ENCODE measurements at regions of chr11 and their contacts with region 1.

Region 1: GRCh38 chr11:113994077-113994954 is 19.4 kb downstream of the HTR3A start:
- DNase-seq: no peak
- ATAC-seq: no peak; the same call in none of the 2 replicates
- H3K4me3 ChIP-seq: no peak overlapping the region
- H3K27ac ChIP-seq: no peak overlapping the region
- H3K4me1 ChIP-seq: no peaks in the 10 kb centered on the region
- H3K27me3 ChIP-seq: no peaks in the 10 kb centered on the region; the same call in 1 of the 2 replicates
- CTCF ChIP-seq: peak; percentile 55
- POLR2A ChIP-seq: no peak
- RAD21 ChIP-seq: peak; percentile 65

Region 2: DNA sequence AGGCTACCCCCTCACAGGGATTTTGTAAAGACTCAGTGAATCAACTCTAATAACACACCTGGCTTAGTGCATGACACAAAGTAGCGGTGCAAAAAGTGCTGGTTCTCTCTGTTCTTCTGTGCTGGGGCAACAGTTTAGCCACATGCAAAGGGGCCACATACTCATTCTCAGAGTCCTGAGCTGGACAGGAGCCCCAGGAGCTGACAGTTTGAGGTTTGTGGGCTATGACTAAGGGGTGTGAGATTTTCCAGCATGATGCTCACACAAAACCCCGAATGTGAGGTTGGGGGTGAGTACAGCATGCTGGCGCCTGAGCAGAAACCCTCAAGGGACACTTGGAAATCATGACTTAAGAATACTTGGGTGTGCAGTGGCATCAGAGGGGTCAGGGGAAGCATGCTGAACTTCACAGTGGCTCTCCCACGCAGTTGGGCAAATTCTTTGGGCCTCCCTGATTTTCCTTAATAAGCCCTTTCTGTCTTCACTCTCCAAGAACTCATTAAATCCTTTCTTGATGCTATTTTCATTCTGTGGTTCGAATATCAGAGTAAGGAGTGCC is 319.2 kb before region 1 on chr11:
- CTCF ChIA-PET with region 1: no interaction called
- POLR2A ChIA-PET with region 1: no interaction called
- dilution Hi-C with region 1: no loop called
- in situ Hi-C with region 1: no loop called
- intact Hi-C with region 1: no loop called
- DNase-seq: peak; percentile 88
- ATAC-seq: peak; percentile 71
- H3K4me3 ChIP-seq: no peak overlapping the region
- H3K27ac ChIP-seq: no peak overlapping the region
- H3K4me1 ChIP-seq: no peaks in the 10 kb centered on the region; the same call in 1 of the 2 replicates
- H3K27me3 ChIP-seq: peaks cover 15% of the 10 kb centered on the region
- CTCF ChIP-seq: no peak
- POLR2A ChIP-seq: no peak
- RAD21 ChIP-seq: no peak

Region 3: GRCh38 chr11:113849713-113850112 is 144.6 kb before region 1 on chr11:
- CTCF ChIA-PET with region 1: no interaction called
- POLR2A ChIA-PET with region 1: no interaction called
- dilution Hi-C with region 1: no loop called
- in situ Hi-C with region 1: no loop called
- intact Hi-C with region 1: no loop called
- DNase-seq: no peak
- ATAC-seq: no peak
- H3K4me3 ChIP-seq: no peak overlapping the region
- H3K27ac ChIP-seq: no peak overlapping the region
- H3K4me1 ChIP-seq: no peaks in the 10 kb centered on the region
- H3K27me3 ChIP-seq: no peaks in the 10 kb centered on the region
- CTCF ChIP-seq: no peak
- POLR2A ChIP-seq: no peak
- RAD21 ChIP-seq: no peak

Region 4: GRCh38 chr11:113896156-113896879 is 98.0 kb before region 1 on chr11:
- CTCF ChIA-PET with region 1: no interaction called
- POLR2A ChIA-PET with region 1: no interaction called
- dilution Hi-C with region 1: no loop called
- in situ Hi-C with region 1: no loop called
- intact Hi-C with region 1: loop called (anchors 5 kb)
- DNase-seq: peak; percentile 22
- ATAC-seq: peak; percentile 88
- H3K4me3 ChIP-seq: no peak overlapping the region
- H3K27ac ChIP-seq: no peak overlapping the region
- H3K4me1 ChIP-seq: no peaks in the 10 kb centered on the region
- H3K27me3 ChIP-seq: peaks cover 9% of the 10 kb centered on the region
- CTCF ChIP-seq: peak; percentile 70
- POLR2A ChIP-seq: no peak
- RAD21 ChIP-seq: peak; percentile 50

Region 5: DNA sequence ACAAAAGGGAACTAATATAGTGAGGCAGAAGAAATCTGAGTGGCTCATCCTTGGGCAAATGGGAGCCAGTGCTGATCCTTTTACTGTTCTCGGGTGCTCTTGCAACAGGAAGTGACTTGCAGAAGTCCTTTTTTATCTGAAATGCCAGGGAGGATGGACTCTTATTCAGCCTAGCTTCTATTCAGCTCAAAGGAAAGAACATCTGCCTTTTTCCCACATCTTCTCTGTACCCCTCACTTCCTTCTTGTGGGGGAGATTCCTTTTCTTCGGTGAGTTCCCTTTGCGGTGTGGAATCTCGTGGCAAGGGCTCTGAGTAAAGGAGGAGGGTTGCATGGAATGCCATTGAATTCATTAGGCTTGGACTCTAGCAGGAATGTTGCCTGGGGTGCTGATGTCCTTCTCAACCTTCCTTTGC is 141.4 kb after region 1 on chr11:
- CTCF ChIA-PET with region 1: no interaction called
- POLR2A ChIA-PET with region 1: no interaction called
- dilution Hi-C with region 1: no loop called
- in situ Hi-C with region 1: no loop called
- intact Hi-C with region 1: no loop called
- DNase-seq: no peak
- ATAC-seq: no peak
- H3K4me3 ChIP-seq: no peak overlapping the region
- H3K27ac ChIP-seq: no peak overlapping the region
- H3K4me1 ChIP-seq: no peaks in the 10 kb centered on the region
- H3K27me3 ChIP-seq: peaks cover 25% of the 10 kb centered on the region
- CTCF ChIP-seq: no peak
- POLR2A ChIP-seq: no peak
- RAD21 ChIP-seq: no peak

Region 6: GRCh38 chr11:114280696-114281095 is 286.4 kb after region 1 on chr11:
- CTCF ChIA-PET with region 1: no interaction called
- POLR2A ChIA-PET with region 1: no interaction called
- dilution Hi-C with region 1: no loop called
- in situ Hi-C with region 1: no loop called
- intact Hi-C with region 1: no loop called
- DNase-seq: peak; percentile 85
- ATAC-seq: peak; percentile 97
- H3K4me3 ChIP-seq: no peak overlapping the region
- H3K27ac ChIP-seq: peak overlapping the region; percentile 44
- H3K4me1 ChIP-seq: peaks cover 15% of the 10 kb centered on the region
- H3K27me3 ChIP-seq: peaks cover 2% of the 10 kb centered on the region; the same call in 1 of the 2 replicates
- CTCF ChIP-seq: peak; percentile 93
- POLR2A ChIP-seq: peak; percentile 58
- RAD21 ChIP-seq: peak; percentile 97

Measured in IMR-90 (cell line).